ENCODE measurements at regions of chr7 and their contacts with region 1.

Region 1: GRCh38 chr7:7424151-7424873 is 111.4 kb downstream of the COL28A1 start:
- DNase-seq: peak; percentile 64 to 83 (median 74)
- H3K4me3 ChIP-seq: peak overlapping the region in 3 of 4 donors; percentile 23 to 79 (median 56)
- H3K27ac ChIP-seq: peak overlapping the region in 1 of 5 donors; percentile 57
- H3K4me1 ChIP-seq: peaks cover 0 to 4% of the 10 kb centered on the region in 2 donors
- H3K27me3 ChIP-seq: no peaks in the 10 kb centered on the region
- CTCF ChIP-seq: peak; percentile 51 to 88 (median 76)
- POLR2A ChIP-seq: no peak

Region 2: GRCh38 chr7:7103343-7104313 is 320.7 kb before region 1 on chr7:
- intact Hi-C with region 1: loop called in 1 of 2 experiments (anchors 10 kb)
- DNase-seq: peak in 2 of 7 donors; percentile 22 to 25
- H3K4me3 ChIP-seq: no peak overlapping the region
- H3K27ac ChIP-seq: no peak overlapping the region
- H3K4me1 ChIP-seq: peaks cover 4 to 18% of the 10 kb centered on the region in 2 donors
- H3K27me3 ChIP-seq: no peaks in the 10 kb centered on the region
- CTCF ChIP-seq: peak; percentile 58 to 76 (median 70)
- POLR2A ChIP-seq: no peak

Region 3: GRCh38 chr7:7535691-7536090 is 111.4 kb after region 1 on chr7 and contains the start of gene COL28A1:
- intact Hi-C with region 1: loop called (anchors 5 to 10 kb)
- DNase-seq: no peak
- H3K4me3 ChIP-seq: no peak within 1 kb of the TSS
- H3K27ac ChIP-seq: no peak within 1 kb of the TSS
- H3K4me1 ChIP-seq: no peaks in the 10 kb centered on the region
- H3K27me3 ChIP-seq: no peaks in the 10 kb centered on the region
- CTCF ChIP-seq: no peak
- POLR2A ChIP-seq: no peak
- total RNA-seq, gene COL28A1: 0.66 to 6.2 (median 1.9) TPM

Region 4: DNA sequence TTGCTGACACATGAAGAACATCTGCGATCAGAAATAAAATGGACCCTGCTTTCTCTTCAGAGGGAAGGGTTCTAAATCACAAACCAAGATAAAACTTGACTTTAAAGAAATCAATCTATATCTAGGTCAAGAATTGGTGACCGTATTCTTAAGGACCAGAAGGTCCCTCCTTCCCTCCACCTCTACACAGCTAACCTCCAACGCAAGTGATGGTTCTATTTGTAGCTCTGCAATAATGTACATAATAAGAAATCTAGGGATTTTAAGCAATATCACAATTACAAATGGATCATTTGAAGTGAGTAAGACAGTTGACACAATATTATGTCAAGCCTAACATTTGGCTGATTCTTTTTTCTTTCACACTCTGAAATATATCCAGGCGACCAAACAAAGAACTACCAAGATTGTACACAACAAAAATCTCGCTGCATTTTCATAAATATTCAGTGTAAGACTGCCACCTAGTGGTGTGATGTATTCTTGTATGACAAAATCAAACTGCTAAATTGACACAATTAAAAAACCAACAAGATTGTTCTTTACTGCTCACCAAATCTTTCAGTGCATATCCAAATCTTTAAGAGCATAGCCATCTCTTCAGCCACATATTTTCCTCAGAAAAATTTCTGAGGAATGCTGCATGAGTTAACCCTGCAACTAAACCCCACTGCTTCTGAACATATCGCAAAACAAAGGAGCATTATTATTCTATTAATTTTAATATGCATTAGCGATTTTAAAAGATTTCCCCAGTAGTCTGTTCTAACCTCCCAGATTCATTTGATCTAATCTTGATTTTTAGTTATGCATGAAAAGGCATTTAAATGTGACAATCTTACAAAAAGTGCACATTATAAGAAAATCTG is 793.1 kb after region 1 on chr7:
- intact Hi-C with region 1: loop called in 1 of 2 experiments (anchors 10 kb)
- DNase-seq: peak in 4 of 7 donors; percentile 14 to 31 (median 22)
- H3K4me3 ChIP-seq: no peak overlapping the region
- H3K27ac ChIP-seq: no peak overlapping the region
- H3K4me1 ChIP-seq: no peaks in the 10 kb centered on the region
- H3K27me3 ChIP-seq: no peaks in the 10 kb centered on the region
- CTCF ChIP-seq: peak; percentile 67 to 86 (median 76)
- POLR2A ChIP-seq: no peak

Measured in adrenal gland (tissue), 19 donors.